Posterior cingulate gyrus (tissue), 11 donors: ENCODE measurements at regions of chr3 and their contacts with region 1.

Region 1: DNA sequence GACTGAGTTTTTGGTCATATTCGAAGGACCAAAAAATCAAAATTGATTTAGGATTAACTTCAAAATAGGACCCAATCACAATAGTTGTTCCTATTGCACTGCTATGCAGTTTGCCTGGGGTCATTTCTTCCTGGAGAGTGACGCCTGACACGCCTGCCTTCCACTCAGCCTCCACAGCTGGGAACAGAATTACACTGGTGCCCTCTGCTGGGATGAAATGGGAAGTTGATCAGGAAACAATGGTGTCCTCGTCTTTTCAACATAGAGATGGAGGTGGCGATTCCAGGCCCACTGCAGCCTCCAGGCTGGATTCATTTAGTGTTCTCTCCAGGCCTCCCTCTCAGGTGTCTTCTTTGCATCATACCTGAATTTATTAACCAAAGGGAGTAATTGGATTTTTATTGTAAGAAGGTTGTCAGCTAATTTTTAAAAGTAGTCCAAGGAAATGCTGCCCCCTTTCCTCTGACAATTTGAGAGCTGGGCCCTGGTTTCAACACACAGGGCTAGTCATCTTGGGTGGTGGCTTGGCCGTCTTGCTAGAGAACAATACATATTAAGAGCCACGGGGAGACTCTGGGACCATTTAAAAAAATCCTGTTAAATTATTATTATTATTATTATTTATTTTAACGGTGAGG is 69.7 kb downstream of the GAP43 start:
- DNase-seq: peak; percentile 35 to 91 (median 76)

Region 2: DNA sequence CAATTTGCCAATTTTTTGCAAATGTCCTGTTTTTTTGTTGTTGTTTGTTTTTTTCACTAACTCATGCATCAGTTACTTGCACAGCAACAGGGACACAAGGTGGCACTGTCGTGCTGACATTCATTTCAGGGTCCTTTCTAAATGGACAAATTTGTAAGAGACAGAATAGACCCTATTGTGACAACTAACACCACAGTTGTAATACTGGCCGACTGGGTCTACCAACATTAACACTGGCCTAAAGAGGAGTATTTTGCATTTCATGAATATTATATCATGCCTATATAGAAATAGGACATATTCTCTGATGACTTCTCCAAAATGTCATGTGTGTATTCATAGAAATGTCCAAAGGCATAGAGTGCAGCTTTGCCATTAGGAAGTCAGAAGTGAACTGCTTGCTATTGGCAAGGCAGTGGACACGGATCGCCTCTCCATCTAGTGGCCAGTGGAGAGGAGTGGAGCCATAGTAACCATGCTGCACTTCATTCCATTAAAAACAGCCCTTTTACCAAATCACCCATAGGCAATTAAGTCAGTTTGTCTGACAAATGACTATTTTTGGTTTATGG is 600.7 kb before region 1 on chr3:
- intact Hi-C with region 1: loop called (anchors 5 kb)
- DNase-seq: peak; percentile 52 to 96 (median 74)

Region 3: DNA sequence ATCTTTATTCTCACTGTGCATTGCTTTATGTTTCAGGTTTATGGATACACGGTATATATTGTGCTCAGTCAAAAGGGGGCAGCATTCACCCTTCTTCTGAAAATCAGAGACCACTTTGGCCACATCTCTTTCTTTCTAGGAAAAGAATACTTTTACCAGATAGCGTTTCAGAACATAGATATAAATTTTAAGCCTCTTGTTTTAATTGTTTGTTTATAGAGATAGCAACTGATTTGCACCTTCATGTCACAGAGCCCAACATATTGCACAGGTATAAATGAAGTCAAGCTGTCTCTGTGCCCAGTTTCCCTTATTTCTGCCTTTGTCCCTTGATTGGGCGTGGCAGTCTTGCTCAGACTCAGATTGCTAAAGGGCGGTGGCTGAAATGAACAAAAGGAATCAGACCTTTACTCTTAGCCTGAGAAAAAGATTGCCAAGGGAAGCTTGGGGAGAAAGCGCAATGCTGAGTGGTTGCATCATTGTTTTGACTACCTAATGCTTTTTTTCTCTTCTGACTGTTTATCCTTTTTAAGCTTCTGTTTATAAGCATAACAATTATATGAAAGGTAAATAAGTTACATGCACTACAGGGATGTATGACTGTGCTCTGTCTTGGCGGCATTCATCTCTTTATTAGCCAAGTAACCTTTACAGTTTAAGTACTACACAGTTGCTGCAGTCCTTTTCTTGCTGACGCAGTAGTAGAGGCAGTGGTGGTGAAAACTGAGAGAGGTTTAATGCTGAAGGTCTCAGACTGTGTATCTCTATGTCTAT is 475.1 kb before region 1 on chr3:
- intact Hi-C with region 1: loop called (anchors 1 kb)
- DNase-seq: peak in 3 of 10 donors; percentile 9 to 24 (median 11)

Region 4: GRCh38 chr3:115783938-115784738 is 91.1 kb after region 1 on chr3:
- intact Hi-C with region 1: loop called (anchors 5 kb)
- DNase-seq: peak; percentile 66 to 97 (median 81)